GM13976 (cell line): ENCODE measurements at regions of chr2 and their contacts with region 1.

Region 1: GRCh38 chr2:70647873-70648481 is 94.4 kb upstream of the TGFA start:
- DNase-seq: peak; percentile 55
- CTCF ChIP-seq: peak; percentile 90

Region 2: DNA sequence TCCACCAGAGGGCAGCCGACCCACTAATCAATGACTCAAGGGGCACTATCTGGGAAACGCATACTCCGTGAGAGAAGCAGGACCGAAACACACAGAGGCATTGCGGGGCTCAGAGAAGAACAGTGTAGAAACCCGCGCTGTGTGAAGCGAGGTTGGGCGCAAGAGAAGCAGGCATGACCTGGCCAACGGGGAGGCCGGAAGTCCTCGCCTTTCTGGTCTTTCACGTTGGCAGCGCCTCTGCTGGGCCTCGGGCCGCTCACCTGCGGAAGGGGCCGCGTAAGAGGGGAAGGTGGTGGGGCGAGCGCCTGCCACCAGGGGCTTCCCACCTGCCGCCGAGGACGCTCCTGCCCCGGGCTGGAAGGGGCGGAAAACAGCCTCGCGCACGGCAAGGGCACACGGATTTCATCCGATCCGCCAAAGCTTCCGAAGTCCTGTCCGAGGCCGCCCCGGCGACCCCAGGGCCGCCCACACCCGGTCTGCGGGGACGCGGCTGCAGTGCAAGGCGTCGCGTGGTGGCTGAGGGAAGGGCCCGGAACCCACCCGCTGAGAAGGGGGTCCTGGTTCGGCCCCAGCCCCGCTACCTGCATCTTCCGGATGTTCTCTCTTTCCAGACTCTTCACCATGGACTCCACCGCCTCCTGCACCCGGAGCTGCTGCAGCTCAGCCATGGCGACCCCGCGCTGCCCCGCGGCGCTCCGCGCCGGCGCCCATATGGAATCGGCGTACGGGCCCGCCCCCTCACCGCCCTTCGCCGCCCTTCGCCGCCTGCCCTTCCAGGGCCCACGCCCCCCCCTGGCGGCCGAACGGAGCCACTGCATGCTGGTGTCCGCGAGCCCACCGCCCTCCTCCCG is 346.4 kb before region 1 on chr2 and contains the start of gene FAM136A:
- in situ Hi-C with region 1: loop called (anchors 25 kb)
- DNase-seq: peak; percentile 93
- CTCF ChIP-seq: peak; percentile 99